AG04450 (cell line): ENCODE measurements at regions of chr12 and their contacts with region 1.

Region 1: GRCh38 chr12:106223485-106224354 is 24.1 kb downstream of the CKAP4 start:
- DNase-seq: no peak
- H3K4me3 ChIP-seq: no peak overlapping the region
- H3K27ac ChIP-seq: peak overlapping the region; percentile 11
- H3K27me3 ChIP-seq: peaks cover 3% of the 10 kb centered on the region
- CTCF ChIP-seq: peak; percentile 96

Region 2: DNA sequence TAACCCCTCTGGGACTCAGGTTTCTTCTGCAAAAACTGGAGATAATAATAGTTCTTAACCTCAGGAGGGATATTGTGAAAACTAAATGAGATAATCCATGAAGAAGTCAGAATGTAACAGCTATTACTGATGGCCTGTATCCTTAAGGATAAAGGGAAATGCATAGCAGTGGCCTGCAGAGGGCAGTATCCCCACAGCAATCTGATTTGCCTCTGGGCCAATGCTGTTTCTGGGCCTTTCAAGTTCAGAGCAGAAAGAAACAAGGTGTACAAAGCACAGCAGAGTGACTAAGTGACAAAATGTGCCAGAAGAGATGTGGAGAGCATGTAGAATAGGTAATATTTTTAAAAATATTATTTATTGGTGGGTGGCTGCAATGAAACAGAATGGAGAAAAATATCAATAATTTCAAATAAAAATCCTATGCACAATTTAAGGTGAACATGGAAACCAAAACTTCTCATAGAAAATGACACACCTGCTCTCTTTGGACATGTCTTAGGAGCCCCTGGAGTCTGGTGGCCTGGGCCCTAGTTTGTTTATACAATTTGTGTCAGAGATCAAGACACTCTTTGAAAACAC is 803.0 kb before region 1 on chr12:
- CTCF ChIA-PET with region 1: interaction called, 55 read pairs
- POLR2A ChIA-PET with region 1: no interaction called
- DNase-seq: peak; percentile 59
- H3K4me3 ChIP-seq: no peak overlapping the region
- H3K27ac ChIP-seq: no peak overlapping the region
- H3K27me3 ChIP-seq: no peaks in the 10 kb centered on the region
- CTCF ChIP-seq: peak; percentile 90

Region 3: GRCh38 chr12:106136263-106136662 is 87.5 kb before region 1 on chr12:
- CTCF ChIA-PET with region 1: interaction called, 12 read pairs
- POLR2A ChIA-PET with region 1: interaction called, 3 read pairs
- DNase-seq: peak; percentile 74
- H3K4me3 ChIP-seq: peak overlapping the region; percentile 77
- H3K27ac ChIP-seq: peak overlapping the region; percentile 22
- H3K27me3 ChIP-seq: no peaks in the 10 kb centered on the region
- CTCF ChIP-seq: peak; percentile 81

Region 4: GRCh38 chr12:106192659-106193393 is 30.9 kb before region 1 on chr12:
- CTCF ChIA-PET with region 1: interaction called, 10 read pairs
- POLR2A ChIA-PET with region 1: no interaction called
- DNase-seq: no peak
- H3K4me3 ChIP-seq: no peak overlapping the region
- H3K27ac ChIP-seq: no peak overlapping the region
- H3K27me3 ChIP-seq: peaks cover 7% of the 10 kb centered on the region
- CTCF ChIP-seq: no peak

Region 5: DNA sequence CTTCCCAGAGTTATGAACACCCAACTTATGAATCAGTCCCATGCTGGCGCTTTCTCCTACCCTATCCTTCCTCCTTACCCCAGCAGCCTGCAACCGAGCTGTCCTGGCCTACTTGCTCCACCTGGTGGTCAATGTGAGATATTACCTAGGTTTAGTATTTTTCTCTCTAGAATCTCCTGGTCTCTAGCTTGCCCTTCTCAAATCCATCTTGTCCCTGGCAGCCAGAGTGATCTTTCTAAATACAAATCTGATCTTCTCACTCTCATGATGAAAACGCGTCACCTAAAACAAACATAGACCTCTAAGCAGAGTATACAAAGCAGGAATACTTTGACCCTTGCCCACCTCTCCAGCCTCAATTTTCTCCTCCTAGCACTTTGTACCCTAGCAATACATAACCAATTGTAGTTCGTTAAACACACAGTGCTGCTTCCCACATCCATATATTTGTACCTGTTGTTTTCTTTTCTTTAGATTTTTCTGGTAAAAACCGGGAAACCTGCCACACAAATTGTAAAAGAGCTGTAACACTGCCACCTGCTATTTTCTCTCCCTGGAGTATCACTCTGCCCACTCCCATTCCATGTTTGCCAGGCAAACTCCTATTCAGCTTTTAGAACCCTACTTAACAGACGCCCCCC is 58.9 kb after region 1 on chr12:
- CTCF ChIA-PET with region 1: interaction called, 33 read pairs
- POLR2A ChIA-PET with region 1: no interaction called
- DNase-seq: no peak
- H3K4me3 ChIP-seq: no peak overlapping the region
- H3K27ac ChIP-seq: no peak overlapping the region
- H3K27me3 ChIP-seq: peaks cover 3% of the 10 kb centered on the region
- CTCF ChIP-seq: peak; percentile 68

Region 6: GRCh38 chr12:106357549-106358395 is 134.1 kb after region 1 on chr12 and contains the start of gene POLR3B:
- CTCF ChIA-PET with region 1: interaction called, 32 read pairs
- POLR2A ChIA-PET with region 1: no interaction called
- DNase-seq: peak; percentile 92
- H3K4me3 ChIP-seq: peak within 1 kb of the TSS; percentile 92
- H3K27ac ChIP-seq: peak within 1 kb of the TSS; percentile 97
- H3K27me3 ChIP-seq: peaks cover 2% of the 10 kb centered on the region
- CTCF ChIP-seq: peak; percentile 95
- polyA plus RNA-seq, gene POLR3B: 11.0 and 14.1 TPM in 2 replicates

Region 7: GRCh38 chr12:106581543-106582248 is 358.0 kb after region 1 on chr12:
- CTCF ChIA-PET with region 1: no interaction called
- POLR2A ChIA-PET with region 1: no interaction called
- DNase-seq: no peak
- H3K4me3 ChIP-seq: no peak overlapping the region
- H3K27ac ChIP-seq: no peak overlapping the region
- H3K27me3 ChIP-seq: peaks cover 76% of the 10 kb centered on the region
- CTCF ChIP-seq: no peak

Region 8: GRCh38 chr12:106919910-106920544 is 696.3 kb after region 1 on chr12:
- CTCF ChIA-PET with region 1: interaction called, 13 read pairs
- POLR2A ChIA-PET with region 1: no interaction called
- DNase-seq: peak; percentile 16
- H3K4me3 ChIP-seq: no peak overlapping the region
- H3K27ac ChIP-seq: no peak overlapping the region
- H3K27me3 ChIP-seq: peaks cover 7% of the 10 kb centered on the region
- CTCF ChIP-seq: peak; percentile 68